Breast epithelium (tissue), 4 donors: ENCODE measurements at regions of chr21 and their contacts with region 1.

Region 1: DNA sequence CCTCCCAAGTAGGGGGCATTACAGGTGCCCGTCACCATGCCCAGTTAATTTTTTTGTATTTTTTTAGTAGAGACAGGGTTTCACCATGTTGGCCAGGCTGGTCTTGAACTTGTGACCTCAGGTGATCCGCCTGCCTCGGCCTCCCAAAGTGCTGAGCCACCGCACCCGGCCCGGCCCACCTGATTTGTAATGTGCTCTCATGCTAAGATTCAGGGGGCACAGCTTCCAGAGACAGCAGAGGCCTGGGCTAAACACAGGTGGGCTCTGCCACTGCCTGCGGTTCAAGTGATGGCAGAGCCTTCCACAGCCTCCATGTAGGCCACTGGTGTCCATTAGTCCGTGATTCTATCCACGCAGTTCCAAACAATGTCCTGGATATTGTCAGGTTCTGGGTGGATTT is 98.4 kb downstream of the PDE9A start:
- DNase-seq: no peak
- H3K4me3 ChIP-seq: no peak overlapping the region
- H3K27ac ChIP-seq: no peak overlapping the region
- H3K4me1 ChIP-seq: no peaks in the 10 kb centered on the region
- H3K27me3 ChIP-seq: no peaks in the 10 kb centered on the region
- CTCF ChIP-seq: no peak
- POLR2A ChIP-seq: no peak

Region 2: GRCh38 chr21:42807938-42808613 is 56.2 kb after region 1 on chr21:
- intact Hi-C with region 1: loop called (anchors 2 kb)
- DNase-seq: no peak
- H3K4me3 ChIP-seq: no peak overlapping the region
- H3K27ac ChIP-seq: no peak overlapping the region
- H3K4me1 ChIP-seq: no peaks in the 10 kb centered on the region
- H3K27me3 ChIP-seq: no peaks in the 10 kb centered on the region
- CTCF ChIP-seq: no peak
- POLR2A ChIP-seq: no peak

Region 3: DNA sequence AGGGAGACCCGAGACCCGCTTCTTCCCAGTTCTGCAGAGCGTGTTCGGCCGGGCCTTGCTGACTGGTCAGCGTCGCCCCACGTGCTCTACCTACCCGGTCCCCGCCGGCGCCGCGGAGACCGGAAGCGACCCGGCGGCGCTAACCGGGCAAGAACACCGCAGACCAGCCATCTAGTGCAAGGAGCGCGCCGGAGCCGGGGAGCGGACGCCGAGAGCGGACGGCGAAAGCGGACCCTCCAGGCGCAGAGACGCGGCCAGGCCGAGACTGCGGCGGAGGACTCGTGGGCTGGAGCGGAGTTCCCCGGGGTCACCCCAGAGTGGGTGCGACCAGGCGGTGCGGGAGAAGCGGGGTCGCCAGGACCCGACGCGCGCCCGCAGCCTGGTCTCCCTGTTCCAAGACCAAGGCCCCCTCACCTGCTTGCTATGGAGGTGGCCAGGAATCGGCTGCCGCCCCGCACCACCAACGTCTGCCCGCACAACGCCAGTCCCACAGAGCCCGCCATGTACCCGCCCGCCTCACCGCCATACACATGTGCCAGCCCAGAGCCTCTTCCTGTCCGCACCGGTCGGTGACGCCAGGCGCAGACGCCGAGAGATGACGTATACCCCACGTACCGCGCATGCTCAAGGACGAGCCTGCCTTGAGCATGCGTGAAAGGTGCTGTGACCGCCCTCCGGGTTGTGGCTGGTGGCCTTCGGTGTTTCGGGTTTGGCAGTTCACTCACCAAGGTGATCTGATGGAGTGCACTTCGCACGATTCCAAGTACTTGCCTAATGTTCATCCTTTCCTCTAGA is 127.3 kb after region 1 on chr21 and contains the start of gene WDR4:
- intact Hi-C with region 1: no loop called
- DNase-seq: peak; percentile 97 to 98
- H3K4me3 ChIP-seq: peak within 1 kb of the TSS; percentile 90 to 99 (median 98)
- H3K27ac ChIP-seq: peak within 1 kb of the TSS; percentile 76 to 93
- H3K4me1 ChIP-seq: no peaks in the 10 kb centered on the region
- H3K27me3 ChIP-seq: no peaks in the 10 kb centered on the region
- CTCF ChIP-seq: no peak
- POLR2A ChIP-seq: peak; percentile 72
- total RNA-seq, gene WDR4: 6.2 to 16.4 (median 12.7) TPM